Endothelial cell of umbilical vein (primary cell): ENCODE measurements at regions of chr11 and their contacts with region 1.

Region 1: DNA sequence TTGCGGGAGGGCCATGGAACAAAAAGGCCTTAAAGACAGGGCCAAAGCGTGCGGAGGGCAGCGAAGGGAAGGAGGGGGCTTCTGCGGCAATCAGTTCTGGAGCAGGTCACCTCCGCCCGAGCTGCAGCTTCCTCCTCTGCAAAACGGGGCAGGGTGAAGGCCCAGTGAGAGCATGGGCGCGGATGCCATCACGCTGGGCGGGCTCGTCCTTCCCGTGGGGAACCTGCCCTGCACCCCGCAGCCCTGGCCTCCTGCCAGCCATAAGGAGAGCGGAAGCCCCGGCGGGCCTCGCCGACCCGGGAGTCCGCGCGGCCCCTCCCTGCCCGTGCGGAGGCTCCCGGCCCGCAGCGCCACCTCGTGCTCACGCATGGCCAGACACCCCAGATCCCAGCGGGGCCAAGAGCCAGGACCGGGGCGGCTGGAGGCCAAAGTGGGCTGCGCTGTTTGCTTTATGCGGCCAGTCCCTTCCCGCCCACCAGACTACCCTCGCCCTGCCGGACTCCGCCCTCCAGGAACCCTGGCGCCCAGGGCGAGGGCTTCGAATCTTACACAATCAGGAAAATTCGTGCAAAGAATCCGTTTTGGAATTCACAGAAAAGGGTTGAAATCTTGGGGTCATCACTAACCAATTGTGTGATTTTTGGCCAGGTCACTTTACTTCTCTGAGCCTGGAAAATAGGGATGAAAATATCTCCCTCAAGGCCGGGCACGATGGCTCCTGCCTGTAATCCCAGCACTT is 16.1 kb downstream of the TSKU start:
- DNase-seq: peak; percentile 62
- H3K4me3 ChIP-seq: peak overlapping the region in 1 of 3 experiments; percentile 30
- H3K27ac ChIP-seq: no peak overlapping the region
- H3K4me1 ChIP-seq: peaks cover 7% of the 10 kb centered on the region
- H3K27me3 ChIP-seq: no peaks in the 10 kb centered on the region
- CTCF ChIP-seq: peak; percentile 89 to 95
- POLR2A ChIP-seq: no peak

Region 2: DNA sequence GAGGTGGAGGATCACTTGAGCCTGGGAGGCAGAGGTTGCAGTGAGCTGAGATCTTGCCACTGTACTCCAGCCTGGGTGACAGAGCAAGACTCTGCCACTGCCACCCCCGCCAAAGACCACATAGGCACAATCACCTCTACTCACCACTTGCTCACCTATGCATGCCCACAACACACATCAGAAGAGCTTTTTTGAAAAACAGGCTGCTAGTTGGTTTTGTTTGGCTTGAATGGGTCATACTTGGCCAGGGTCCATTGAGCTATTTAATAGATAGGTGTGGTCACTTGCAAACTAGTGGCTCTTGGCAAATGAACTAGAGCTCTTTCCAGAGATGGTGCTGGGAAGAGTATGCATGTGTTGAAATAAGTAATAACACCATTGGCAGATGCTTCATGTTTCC is 274.3 kb before region 1 on chr11:
- CTCF ChIA-PET with region 1: no interaction called
- POLR2A ChIA-PET with region 1: no interaction called
- dilution Hi-C with region 1: no loop called
- intact Hi-C with region 1: no loop called
- DNase-seq: no peak
- H3K4me3 ChIP-seq: no peak overlapping the region
- H3K27ac ChIP-seq: no peak overlapping the region
- H3K4me1 ChIP-seq: no peaks in the 10 kb centered on the region
- H3K27me3 ChIP-seq: no peaks in the 10 kb centered on the region
- CTCF ChIP-seq: no peak
- POLR2A ChIP-seq: no peak

Region 3: DNA sequence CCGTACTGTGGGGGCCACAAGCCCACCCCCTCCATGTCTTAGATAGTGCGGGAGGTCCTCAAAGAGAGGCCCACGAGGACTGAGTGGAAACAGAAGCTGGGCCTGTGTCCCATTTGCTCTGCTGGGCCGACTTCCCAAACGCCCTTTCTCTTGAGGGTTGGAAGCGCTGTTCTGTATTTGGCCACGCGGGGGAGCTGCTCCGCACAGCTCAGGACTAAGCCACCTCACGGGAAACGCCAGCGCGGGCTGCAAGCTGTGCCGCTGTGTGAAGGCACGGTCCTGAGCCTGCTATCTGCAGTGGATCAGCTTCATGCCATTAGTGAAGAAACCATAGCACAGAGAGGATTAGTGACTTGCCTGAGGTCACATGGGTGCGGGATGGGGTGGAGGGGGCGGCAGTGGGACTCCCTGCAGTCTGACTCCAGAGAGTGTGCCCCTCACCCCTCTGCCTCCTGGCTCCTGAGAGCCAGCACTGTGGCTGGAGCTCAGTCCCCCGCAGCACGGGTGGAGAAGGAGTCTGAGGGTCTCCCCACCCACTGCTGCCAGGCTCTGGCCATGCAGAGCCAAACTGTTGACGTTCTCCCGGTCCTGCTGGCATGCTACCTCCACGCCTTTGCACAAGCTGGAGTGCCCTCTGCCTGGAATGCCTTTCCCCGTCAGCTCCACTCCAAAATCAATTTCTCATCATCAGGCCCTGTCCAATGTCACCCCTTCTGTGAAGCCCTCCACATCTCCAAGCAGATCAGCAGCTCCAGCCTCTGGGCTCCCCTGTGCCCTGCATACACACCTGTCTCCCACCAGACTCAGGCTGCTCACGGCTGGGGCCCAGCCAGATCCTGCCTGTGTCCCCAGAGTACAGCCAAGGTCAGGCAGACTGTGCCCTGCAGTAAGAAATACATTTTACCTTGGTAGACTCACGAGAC is 77.2 kb before region 1 on chr11:
- CTCF ChIA-PET with region 1: interaction called, 96 read pairs
- POLR2A ChIA-PET with region 1: no interaction called
- dilution Hi-C with region 1: no loop called
- intact Hi-C with region 1: no loop called
- DNase-seq: peak; percentile 77
- H3K4me3 ChIP-seq: no peak overlapping the region
- H3K27ac ChIP-seq: no peak overlapping the region
- H3K4me1 ChIP-seq: no peaks in the 10 kb centered on the region
- H3K27me3 ChIP-seq: peaks cover 20 to 24% of the 10 kb centered on the region in 2 experiments
- CTCF ChIP-seq: peak; percentile 92 to 95
- POLR2A ChIP-seq: no peak

Region 4: DNA sequence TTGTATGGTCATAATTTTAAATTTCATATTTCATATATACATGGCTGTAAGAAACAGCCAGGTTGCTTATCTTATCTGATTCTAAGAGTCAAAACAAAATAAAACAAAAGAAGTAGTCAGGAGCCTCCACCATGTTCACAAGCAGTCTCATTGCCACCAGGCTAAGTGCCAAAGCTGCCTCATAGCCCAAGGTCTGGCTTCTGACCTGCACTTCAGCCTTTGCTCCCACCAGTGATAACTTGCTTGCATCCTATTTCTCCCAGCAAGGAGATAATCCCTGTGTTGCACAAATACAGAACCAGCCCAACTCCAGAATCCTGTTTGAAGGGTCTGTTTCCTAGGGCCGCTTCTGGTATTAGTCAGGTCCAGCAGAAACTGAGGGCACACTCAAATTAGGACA is 70.0 kb before region 1 on chr11:
- CTCF ChIA-PET with region 1: interaction called, 287 read pairs
- POLR2A ChIA-PET with region 1: interaction called, 3 read pairs
- dilution Hi-C with region 1: no loop called
- intact Hi-C with region 1: loop called (anchors 1 kb)
- DNase-seq: no peak
- H3K4me3 ChIP-seq: no peak overlapping the region
- H3K27ac ChIP-seq: no peak overlapping the region
- H3K4me1 ChIP-seq: no peaks in the 10 kb centered on the region
- H3K27me3 ChIP-seq: peaks cover 18 to 27% of the 10 kb centered on the region in 2 experiments
- CTCF ChIP-seq: no peak
- POLR2A ChIP-seq: no peak

Region 5: GRCh38 chr11:76748948-76749347 is 50.3 kb before region 1 on chr11:
- CTCF ChIA-PET with region 1: interaction called, 18 read pairs
- POLR2A ChIA-PET with region 1: no interaction called
- dilution Hi-C with region 1: no loop called
- intact Hi-C with region 1: no loop called
- DNase-seq: no peak
- H3K4me3 ChIP-seq: no peak overlapping the region
- H3K27ac ChIP-seq: no peak overlapping the region
- H3K4me1 ChIP-seq: peaks cover 2% of the 10 kb centered on the region
- H3K27me3 ChIP-seq: no peaks in the 10 kb centered on the region
- CTCF ChIP-seq: no peak
- POLR2A ChIP-seq: no peak

Region 6: GRCh38 chr11:76768088-76768908 is 30.9 kb before region 1 on chr11:
- CTCF ChIA-PET with region 1: interaction called, 8 read pairs
- POLR2A ChIA-PET with region 1: no interaction called
- dilution Hi-C with region 1: no loop called
- intact Hi-C with region 1: loop called (anchors 2 kb)
- DNase-seq: peak; percentile 71
- H3K4me3 ChIP-seq: no peak overlapping the region
- H3K27ac ChIP-seq: no peak overlapping the region
- H3K4me1 ChIP-seq: peaks cover 22% of the 10 kb centered on the region
- H3K27me3 ChIP-seq: no peaks in the 10 kb centered on the region
- CTCF ChIP-seq: no peak
- POLR2A ChIP-seq: no peak

Region 7: DNA sequence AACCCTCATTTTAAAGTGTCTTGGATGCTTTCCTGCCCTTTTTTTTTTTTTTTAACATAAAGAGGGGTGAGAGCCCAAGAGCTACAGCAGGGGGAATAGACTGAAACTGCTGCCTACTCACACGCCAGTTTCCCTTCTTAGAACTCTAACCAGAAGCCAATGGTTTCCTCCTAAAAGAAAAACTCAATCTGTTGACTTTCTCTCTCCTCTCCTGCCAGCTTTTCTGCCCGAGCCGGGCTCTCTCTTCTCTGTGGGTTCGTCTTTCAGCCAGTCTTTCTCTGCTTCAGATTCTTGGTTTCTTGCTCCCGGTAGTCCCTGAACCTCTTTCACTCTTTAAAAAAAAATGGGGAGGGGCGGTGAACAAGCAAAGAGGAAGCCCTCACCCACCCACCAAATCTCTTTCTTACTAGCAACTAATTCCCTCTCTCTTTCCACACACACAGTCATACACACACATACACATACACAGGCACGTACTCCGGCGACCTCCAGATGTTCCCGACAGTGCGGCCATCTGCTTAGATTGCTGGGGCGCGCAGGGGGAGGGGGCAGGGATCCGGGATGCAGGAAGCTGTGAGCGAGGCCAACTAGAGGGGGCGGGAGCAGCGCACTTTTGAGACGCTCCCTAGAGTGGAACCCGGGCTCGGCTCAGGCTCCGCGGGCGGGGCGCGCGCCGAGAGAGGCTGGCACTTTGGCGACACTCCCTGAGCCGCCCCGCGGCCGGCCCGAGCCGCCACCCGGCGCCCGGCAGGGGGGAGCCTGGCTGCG is 16.5 kb before region 1 on chr11:
- CTCF ChIA-PET with region 1: interaction called, 15 read pairs
- POLR2A ChIA-PET with region 1: no interaction called
- dilution Hi-C with region 1: no loop called
- intact Hi-C with region 1: loop called (anchors 1 kb)
- DNase-seq: peak; percentile 86
- H3K4me3 ChIP-seq: peak overlapping the region; percentile 68 to 91 (median 84)
- H3K27ac ChIP-seq: peak overlapping the region; percentile 44
- H3K4me1 ChIP-seq: peaks cover 2% of the 10 kb centered on the region
- H3K27me3 ChIP-seq: peaks cover 0 to 2% of the 10 kb centered on the region in 2 experiments
- CTCF ChIP-seq: no peak
- POLR2A ChIP-seq: peak; percentile 74

Region 8: DNA sequence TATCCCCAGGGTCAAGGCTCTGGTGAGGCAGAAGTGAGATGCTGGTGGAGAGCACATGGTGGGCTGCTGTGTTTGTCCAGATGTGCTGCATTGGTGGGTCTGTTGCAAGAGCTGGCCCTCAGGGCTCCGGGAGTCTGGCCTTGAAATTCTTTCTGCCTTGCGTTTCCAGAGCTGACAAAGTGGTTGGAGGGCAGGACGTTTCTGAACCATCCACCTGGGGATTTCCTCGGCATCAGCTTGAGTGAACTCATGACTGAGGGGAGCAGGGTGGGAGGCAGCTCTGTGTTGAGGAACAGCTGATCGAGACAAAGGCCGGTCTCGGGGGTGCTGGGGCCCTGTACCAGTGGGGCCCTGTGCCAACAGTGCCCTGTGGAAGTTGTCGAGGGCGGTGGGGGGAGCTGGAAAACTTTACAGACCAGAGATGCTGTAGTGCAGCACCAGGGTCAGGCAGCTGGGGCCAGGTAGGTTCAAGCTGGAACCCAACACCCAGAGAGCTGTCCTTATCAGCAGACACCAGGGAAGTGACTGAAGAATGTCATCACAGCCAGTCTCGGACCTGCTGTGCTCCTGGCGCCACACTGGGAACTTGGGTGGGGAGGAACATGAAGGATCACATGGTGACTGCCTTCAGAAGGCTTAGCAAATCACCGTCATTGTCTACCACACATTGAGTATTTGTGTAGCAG is 11.2 kb before region 1 on chr11:
- CTCF ChIA-PET with region 1: interaction called, 15 read pairs
- POLR2A ChIA-PET with region 1: no interaction called
- dilution Hi-C with region 1: no loop called
- intact Hi-C with region 1: loop called (anchors 1 kb)
- DNase-seq: no peak
- H3K4me3 ChIP-seq: no peak overlapping the region
- H3K27ac ChIP-seq: no peak overlapping the region
- H3K4me1 ChIP-seq: peaks cover 2% of the 10 kb centered on the region
- H3K27me3 ChIP-seq: no peaks in the 10 kb centered on the region
- CTCF ChIP-seq: no peak
- POLR2A ChIP-seq: no peak